MCF 10A (cell line): ENCODE measurements at regions of chr5 and their contacts with region 1.

Region 1: DNA sequence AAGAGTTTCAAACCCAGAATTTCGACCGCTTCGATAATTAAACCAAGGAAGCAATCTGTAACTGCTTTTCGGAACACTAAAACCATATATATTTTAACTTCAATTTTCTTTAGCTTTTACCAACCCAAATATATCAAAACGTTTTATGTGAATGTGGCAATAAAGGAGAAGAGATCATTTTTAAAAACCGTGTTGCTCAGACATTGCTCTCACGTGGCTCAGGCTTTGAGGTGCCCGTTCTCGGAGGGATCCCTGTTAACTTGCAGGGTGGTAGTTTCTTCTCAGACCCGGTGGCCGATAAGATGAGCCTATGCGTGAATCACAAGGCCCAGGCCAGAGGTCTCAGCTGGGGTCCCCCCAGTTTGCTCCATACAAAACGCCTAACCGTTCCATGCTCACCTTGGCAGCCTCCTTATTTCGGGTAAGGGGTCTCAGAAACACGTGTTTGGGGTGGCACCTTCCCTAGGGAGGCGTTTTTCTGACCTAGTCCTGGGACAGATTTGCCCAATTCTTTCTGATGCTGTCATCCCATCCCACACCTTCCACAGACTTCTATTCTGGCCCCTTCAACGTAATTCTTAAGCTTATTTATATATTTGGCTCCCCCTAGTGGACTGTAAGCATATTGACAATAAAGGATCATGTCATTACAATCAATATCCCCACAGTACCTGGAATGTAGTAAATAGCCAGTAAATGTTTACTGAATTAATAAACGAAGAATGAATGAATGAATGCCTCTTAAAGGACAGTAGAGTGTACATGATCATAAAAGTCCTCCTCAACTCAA is 48.1 kb downstream of the THBS4 start:
- DNase-seq: peak; percentile 82
- H3K4me3 Mint-ChIP-seq: peak overlapping the region; percentile 74
- H3K27ac Mint-ChIP-seq: peak overlapping the region; percentile 67
- H3K4me1 Mint-ChIP-seq: peaks cover 11% of the 10 kb centered on the region
- H3K27me3 Mint-ChIP-seq: no peaks in the 10 kb centered on the region
- CTCF ChIP-seq: peak; percentile 60

Region 2: GRCh38 chr5:79702606-79703382 is 380.5 kb before region 1 on chr5:
- CTCF ChIA-PET with region 1: interaction called, 5 read pairs
- POLR2A ChIA-PET with region 1: no interaction called
- intact Hi-C with region 1: loop called (anchors 2 kb)
- DNase-seq: peak; percentile 60
- H3K4me3 Mint-ChIP-seq: no peak overlapping the region
- H3K27ac Mint-ChIP-seq: peak overlapping the region; percentile 63
- H3K4me1 Mint-ChIP-seq: peaks cover 10% of the 10 kb centered on the region
- H3K27me3 Mint-ChIP-seq: no peaks in the 10 kb centered on the region
- CTCF ChIP-seq: peak; percentile 43

Region 3: DNA sequence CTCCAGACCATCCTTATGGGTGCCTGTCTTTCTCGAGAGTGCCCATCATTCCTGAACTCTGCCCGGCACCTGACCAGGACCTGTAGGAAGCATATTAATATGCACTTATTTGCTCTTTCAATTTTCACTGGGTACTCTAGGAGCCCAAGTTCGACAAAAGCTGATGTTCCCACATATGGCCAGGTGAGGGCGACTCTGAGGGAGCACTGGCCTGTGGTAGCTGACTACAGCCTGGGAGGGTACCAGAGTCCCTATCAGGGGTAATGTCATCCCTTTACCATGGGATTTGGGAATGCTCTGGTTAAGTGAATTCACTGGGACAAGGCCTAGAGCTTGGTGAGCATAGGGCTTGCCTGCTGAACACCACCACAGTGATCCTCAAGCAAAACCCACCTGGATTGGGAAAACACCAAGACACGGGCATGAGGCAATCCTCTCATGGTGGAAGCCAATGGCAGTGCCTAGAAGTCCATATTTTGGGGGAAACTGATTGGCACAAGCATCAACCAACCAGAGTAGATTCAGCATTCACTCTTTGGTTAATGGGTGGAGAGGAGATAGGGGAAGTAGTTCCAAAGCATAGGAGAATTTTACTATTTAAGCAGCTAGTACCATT is 204.5 kb before region 1 on chr5:
- CTCF ChIA-PET with region 1: interaction called, 4 read pairs
- POLR2A ChIA-PET with region 1: no interaction called
- intact Hi-C with region 1: loop called (anchors 2 kb)
- DNase-seq: peak; percentile 34
- H3K4me3 Mint-ChIP-seq: no peak overlapping the region
- H3K27ac Mint-ChIP-seq: no peak overlapping the region
- H3K4me1 Mint-ChIP-seq: no peaks in the 10 kb centered on the region
- H3K27me3 Mint-ChIP-seq: peaks cover 2% of the 10 kb centered on the region
- CTCF ChIP-seq: peak; percentile 27

Region 4: DNA sequence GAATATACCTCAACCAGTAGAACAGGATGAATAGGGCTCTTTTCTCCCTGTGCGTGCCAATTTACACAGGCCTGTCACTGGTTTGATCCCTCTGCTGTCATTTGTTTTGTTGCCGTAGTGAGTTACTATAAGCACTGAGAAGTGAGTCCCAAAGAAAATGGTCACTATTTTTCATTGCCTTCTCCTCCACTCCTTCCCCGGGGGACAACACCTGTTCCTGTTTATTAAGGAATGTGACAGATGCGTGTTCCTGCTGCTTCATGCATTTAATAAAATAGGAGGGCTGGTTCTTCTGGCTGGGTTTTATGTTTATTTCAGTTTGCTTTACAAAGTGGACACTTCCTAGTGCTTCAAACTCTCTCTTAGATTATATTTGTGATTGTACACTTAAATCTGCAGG is 41.8 kb before region 1 on chr5:
- CTCF ChIA-PET with region 1: interaction called, 11 read pairs
- POLR2A ChIA-PET with region 1: no interaction called
- intact Hi-C with region 1: no loop called
- DNase-seq: no peak
- H3K4me3 Mint-ChIP-seq: no peak overlapping the region
- H3K27ac Mint-ChIP-seq: no peak overlapping the region
- H3K4me1 Mint-ChIP-seq: no peaks in the 10 kb centered on the region
- H3K27me3 Mint-ChIP-seq: peaks cover 62% of the 10 kb centered on the region
- CTCF ChIP-seq: no peak

Region 5: GRCh38 chr5:80308526-80308925 is 225.2 kb after region 1 on chr5:
- CTCF ChIA-PET with region 1: interaction called, 304 read pairs
- POLR2A ChIA-PET with region 1: no interaction called
- intact Hi-C with region 1: no loop called
- DNase-seq: no peak
- H3K4me3 Mint-ChIP-seq: no peak overlapping the region
- H3K27ac Mint-ChIP-seq: no peak overlapping the region
- H3K4me1 Mint-ChIP-seq: no peaks in the 10 kb centered on the region
- H3K27me3 Mint-ChIP-seq: no peaks in the 10 kb centered on the region
- CTCF ChIP-seq: no peak